ENCODE measurements at regions of chr12 and their contacts with region 1.

Region 1: GRCh38 chr12:108457006-108457733 is 57.9 kb upstream of the FICD start:
- DNase-seq: peak; percentile 68
- H3K4me3 ChIP-seq: no peak overlapping the region
- H3K27ac ChIP-seq: peak overlapping the region in 1 of 2 experiments; percentile 90; a peak in 2 of 4 replicates
- H3K4me1 ChIP-seq: peaks cover 0 to 14% of the 10 kb centered on the region in 2 experiments; a peak in 2 of 4 replicates
- H3K27me3 ChIP-seq: no peaks in the 10 kb centered on the region
- CTCF ChIP-seq: peak; percentile 66
- EP300 ChIP-seq: no peak
- RAD21 ChIP-seq: peak; percentile 93

Region 2: GRCh38 chr12:108129017-108129812 is 328.0 kb before region 1 on chr12 and contains the start of gene WSCD2:
- CTCF ChIA-PET with region 1: interaction called, 22 read pairs
- POLR2A ChIA-PET with region 1: no interaction called
- DNase-seq: peak; percentile 90
- H3K4me3 ChIP-seq: peak within 1 kb of the TSS in 1 of 2 experiments; percentile 48; a peak in 3 of 4 replicates
- H3K27ac ChIP-seq: peak within 1 kb of the TSS in 1 of 2 experiments; percentile 69; a peak in 2 of 4 replicates
- H3K4me1 ChIP-seq: peaks cover 0 to 26% of the 10 kb centered on the region in 2 experiments; a peak in 1 of 4 replicates
- H3K27me3 ChIP-seq: no peaks in the 10 kb centered on the region
- CTCF ChIP-seq: no peak
- EP300 ChIP-seq: no peak
- RAD21 ChIP-seq: peak; percentile 53
- polyA plus RNA-seq, gene WSCD2: 0.03 and 0.05 TPM in 2 replicates

Region 3: GRCh38 chr12:108218921-108219320 is 238.2 kb before region 1 on chr12:
- CTCF ChIA-PET with region 1: no interaction called
- POLR2A ChIA-PET with region 1: no interaction called
- DNase-seq: no peak
- H3K4me3 ChIP-seq: no peak overlapping the region
- H3K27ac ChIP-seq: no peak overlapping the region
- H3K4me1 ChIP-seq: peaks cover 0 to 11% of the 10 kb centered on the region in 2 experiments; a peak in 1 of 4 replicates
- H3K27me3 ChIP-seq: no peaks in the 10 kb centered on the region
- CTCF ChIP-seq: no peak
- EP300 ChIP-seq: no peak
- RAD21 ChIP-seq: no peak

Region 4: GRCh38 chr12:108297895-108298760 is 159.0 kb before region 1 on chr12:
- CTCF ChIA-PET with region 1: interaction called, 20 read pairs
- POLR2A ChIA-PET with region 1: no interaction called
- DNase-seq: no peak
- H3K4me3 ChIP-seq: no peak overlapping the region
- H3K27ac ChIP-seq: peak overlapping the region in 1 of 2 experiments; percentile 95; a peak in 2 of 4 replicates
- H3K4me1 ChIP-seq: peaks cover 0 to 46% of the 10 kb centered on the region in 2 experiments; a peak in 2 of 4 replicates
- H3K27me3 ChIP-seq: no peaks in the 10 kb centered on the region
- CTCF ChIP-seq: no peak
- EP300 ChIP-seq: no peak
- RAD21 ChIP-seq: no peak

Region 5: DNA sequence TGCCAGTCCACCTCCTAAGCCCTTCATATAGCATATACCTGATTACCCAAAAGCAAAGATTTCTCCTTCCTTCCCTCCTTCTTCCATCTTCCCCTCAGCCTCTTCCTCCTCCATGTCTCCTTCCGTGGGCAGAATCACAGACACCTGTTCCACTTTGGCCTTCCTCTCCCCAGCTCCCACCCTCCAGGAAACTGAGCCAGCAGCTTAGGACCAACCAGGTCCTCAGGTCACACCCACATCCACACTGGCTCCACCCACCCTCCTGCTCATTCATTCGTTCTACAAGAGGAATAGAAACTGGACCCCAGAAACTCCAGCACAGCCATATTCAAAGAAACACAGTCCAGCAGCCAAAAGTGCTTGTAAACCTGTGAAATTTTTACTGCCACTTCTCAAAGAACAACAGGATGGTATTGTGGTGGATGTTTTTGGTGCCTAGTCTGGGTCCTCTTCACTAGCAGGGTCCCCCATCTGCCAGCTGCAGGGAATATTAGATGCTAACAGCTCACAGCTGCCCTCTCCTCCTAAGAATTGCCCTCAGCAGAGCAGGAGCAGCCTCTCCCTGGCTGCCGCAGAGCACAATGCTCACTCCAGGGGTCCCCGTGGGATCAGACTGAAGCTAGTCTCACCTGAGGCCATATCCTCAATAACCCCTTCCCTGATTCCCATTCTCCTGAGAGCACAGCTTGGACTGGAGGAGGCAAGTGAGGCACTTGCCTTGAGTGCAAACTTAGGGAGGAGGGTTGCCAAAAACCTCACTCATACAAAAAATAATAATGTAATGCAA is 136.5 kb before region 1 on chr12:
- CTCF ChIA-PET with region 1: interaction called, 23 read pairs
- POLR2A ChIA-PET with region 1: no interaction called
- DNase-seq: no peak
- H3K4me3 ChIP-seq: no peak overlapping the region
- H3K27ac ChIP-seq: peak overlapping the region in 1 of 2 experiments; percentile 39; a peak in 1 of 4 replicates
- H3K4me1 ChIP-seq: peaks cover 0 to 38% of the 10 kb centered on the region in 2 experiments; a peak in 1 of 4 replicates
- H3K27me3 ChIP-seq: no peaks in the 10 kb centered on the region
- CTCF ChIP-seq: no peak
- EP300 ChIP-seq: no peak
- RAD21 ChIP-seq: peak; percentile 66

Region 6: DNA sequence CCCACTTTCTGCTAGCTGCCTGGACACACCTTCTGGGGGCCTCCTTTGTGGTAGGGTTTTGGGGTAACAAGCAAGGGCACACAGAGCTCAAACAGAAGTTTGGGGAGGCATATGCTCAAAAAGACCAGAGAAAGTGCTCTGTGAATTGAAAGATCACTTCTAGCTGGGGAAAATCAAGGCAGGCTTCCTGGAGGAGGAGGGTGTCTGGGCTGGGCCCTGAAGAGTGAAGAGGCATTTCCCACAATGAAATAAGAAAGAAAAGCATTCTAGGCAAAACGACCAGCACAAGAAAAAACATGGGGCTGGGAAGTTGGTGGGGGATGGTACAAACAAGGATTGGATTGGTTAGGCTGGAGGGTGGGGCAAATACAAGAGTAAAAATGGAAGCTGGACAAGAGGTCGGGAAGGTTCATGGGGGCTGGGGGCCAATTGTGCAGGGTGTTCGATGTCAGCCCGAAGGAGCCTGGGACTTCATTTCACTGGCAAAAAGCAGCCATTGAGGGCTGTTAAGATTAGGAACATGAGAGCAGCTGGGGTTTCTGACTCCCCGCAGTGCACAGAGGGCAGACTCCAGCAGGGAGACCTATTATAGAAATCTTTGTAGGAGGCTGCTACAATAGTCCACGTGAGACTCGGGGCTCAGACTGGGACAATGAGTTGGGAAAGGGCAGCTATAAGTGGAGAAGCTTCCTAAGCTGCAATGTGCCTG is 66.5 kb before region 1 on chr12:
- CTCF ChIA-PET with region 1: interaction called, 16 read pairs
- POLR2A ChIA-PET with region 1: no interaction called
- DNase-seq: no peak
- H3K4me3 ChIP-seq: no peak overlapping the region
- H3K27ac ChIP-seq: peak overlapping the region in 1 of 2 experiments; percentile 98; a peak in 2 of 4 replicates
- H3K4me1 ChIP-seq: peaks cover 0 to 61% of the 10 kb centered on the region in 2 experiments; a peak in 2 of 4 replicates
- H3K27me3 ChIP-seq: no peaks in the 10 kb centered on the region
- CTCF ChIP-seq: no peak
- EP300 ChIP-seq: no peak
- RAD21 ChIP-seq: no peak

Region 7: GRCh38 chr12:108514973-108515814 is 58.0 kb after region 1 on chr12 and contains the start of gene FICD:
- CTCF ChIA-PET with region 1: interaction called, 21 read pairs
- POLR2A ChIA-PET with region 1: no interaction called
- DNase-seq: peak; percentile 96
- H3K4me3 ChIP-seq: peak within 1 kb of the TSS; percentile 68 to 92
- H3K27ac ChIP-seq: peak within 1 kb of the TSS; percentile 40 to 41; a peak in 2 of 4 replicates
- H3K4me1 ChIP-seq: peaks cover 5 to 17% of the 10 kb centered on the region in 2 experiments; a peak in 1 of 4 replicates
- H3K27me3 ChIP-seq: no peaks in the 10 kb centered on the region
- CTCF ChIP-seq: no peak
- EP300 ChIP-seq: no peak
- RAD21 ChIP-seq: no peak
- polyA plus RNA-seq, gene FICD: 1.0 and 1.2 TPM in 2 replicates